Motor neuron (in vitro differentiated cells): ENCODE measurements at regions of chr10 and their contacts with region 1.

Region 1: GRCh38 chr10:29735596-29736318 is 101.0 kb upstream of the SVIL start:
- ATAC-seq: peak; percentile 58 to 88 (median 83)
- H3K4me3 ChIP-seq: peak overlapping the region; percentile 62 to 88 (median 80)
- H3K27ac ChIP-seq: peak overlapping the region; percentile 34 to 36
- H3K4me1 ChIP-seq: peaks cover 13 to 19% of the 10 kb centered on the region in 2 donors

Region 2: GRCh38 chr10:29635711-29636144 is 100.0 kb before region 1 on chr10:
- in situ Hi-C with region 1: loop called in 1 of 9 experiments (anchors 10 kb)
- ATAC-seq: peak in 4 of 8 experiments; percentile 41 to 75 (median 58)
- H3K4me3 ChIP-seq: no peak overlapping the region
- H3K27ac ChIP-seq: no peak overlapping the region
- H3K4me1 ChIP-seq: peaks cover 18 to 28% of the 10 kb centered on the region in 2 donors

Region 3: GRCh38 chr10:29857843-29858701 is 122.3 kb after region 1 on chr10:
- in situ Hi-C with region 1: loop called in 1 of 9 experiments (anchors 10 kb)
- ATAC-seq: peak; percentile 23 to 90 (median 48)
- H3K4me3 ChIP-seq: no peak overlapping the region
- H3K27ac ChIP-seq: no peak overlapping the region
- H3K4me1 ChIP-seq: peaks cover 0 to 2% of the 10 kb centered on the region in 2 donors